ENCODE measurements at regions of chr5 and their contacts with region 1.

Region 1: GRCh38 chr5:141734501-141735230 is 52.6 kb upstream of the ARAP3 start:
- DNase-seq: peak; percentile 84
- H3K4me3 Mint-ChIP-seq: no peak overlapping the region
- H3K27ac Mint-ChIP-seq: no peak overlapping the region
- H3K4me1 Mint-ChIP-seq: no peaks in the 10 kb centered on the region
- H3K27me3 Mint-ChIP-seq: peaks cover 9% of the 10 kb centered on the region

Region 2: DNA sequence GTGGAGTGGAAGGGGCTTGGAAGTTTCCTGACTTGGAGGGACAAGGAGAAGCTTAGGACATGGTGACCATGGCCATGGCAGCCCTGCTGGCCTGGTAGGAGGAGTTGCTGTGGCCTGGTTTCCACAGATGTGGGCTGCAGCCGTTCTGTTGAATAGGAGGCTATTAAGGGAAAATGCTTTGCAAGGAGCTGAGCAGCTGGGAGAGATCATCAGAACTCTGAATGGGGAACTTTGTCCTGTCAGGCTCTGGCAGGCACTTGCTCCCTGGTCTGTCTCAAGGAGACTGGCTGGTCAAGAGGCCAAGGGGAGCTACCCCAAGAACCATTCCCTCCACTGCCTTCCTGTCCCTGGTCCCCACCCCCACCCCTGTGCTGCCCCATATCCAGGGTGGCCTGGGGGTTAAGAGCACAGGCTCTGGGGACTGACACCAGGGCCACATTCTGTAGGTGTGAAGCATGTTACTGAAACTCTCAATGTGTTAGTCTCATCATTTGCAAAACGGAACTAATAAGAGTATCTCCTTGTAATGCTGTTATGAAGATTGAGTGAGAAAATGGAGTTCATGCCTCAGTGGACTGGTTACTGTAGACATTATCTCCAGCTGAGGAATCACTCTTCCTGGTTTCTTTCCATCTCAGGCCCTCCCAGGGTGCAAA is 31.4 kb after region 1 on chr5:
- intact Hi-C with region 1: loop called (anchors 5 kb)
- DNase-seq: no peak
- H3K4me3 Mint-ChIP-seq: no peak overlapping the region
- H3K27ac Mint-ChIP-seq: no peak overlapping the region
- H3K4me1 Mint-ChIP-seq: no peaks in the 10 kb centered on the region
- H3K27me3 Mint-ChIP-seq: peaks cover 2% of the 10 kb centered on the region

Region 3: GRCh38 chr5:141940695-141941271 is 206.1 kb after region 1 on chr5:
- intact Hi-C with region 1: no loop called
- DNase-seq: no peak
- H3K4me3 Mint-ChIP-seq: no peak overlapping the region
- H3K27ac Mint-ChIP-seq: peak overlapping the region; percentile 68
- H3K4me1 Mint-ChIP-seq: peaks cover 11% of the 10 kb centered on the region
- H3K27me3 Mint-ChIP-seq: no peaks in the 10 kb centered on the region

Measured in activated CD4-positive, alpha-beta T cell treated with anti-CD3 and anti-CD28 coated beads, Interleukin-2, amount 10 ng/mL, durations not matched to agents 24 days and 14 days (primary cell).